ENCODE measurements at regions of chr9 and their contacts with region 1.

Region 1: GRCh38 chr9:94065535-94065961 is 18.7 kb upstream of the PTPDC1 start:
- DNase-seq: peak; percentile 86
- H3K4me3 ChIP-seq: no peak overlapping the region
- H3K27ac ChIP-seq: no peak overlapping the region
- H3K4me1 ChIP-seq: no peaks in the 10 kb centered on the region
- H3K27me3 ChIP-seq: no peaks in the 10 kb centered on the region
- CTCF ChIP-seq: peak; percentile 86

Region 2: DNA sequence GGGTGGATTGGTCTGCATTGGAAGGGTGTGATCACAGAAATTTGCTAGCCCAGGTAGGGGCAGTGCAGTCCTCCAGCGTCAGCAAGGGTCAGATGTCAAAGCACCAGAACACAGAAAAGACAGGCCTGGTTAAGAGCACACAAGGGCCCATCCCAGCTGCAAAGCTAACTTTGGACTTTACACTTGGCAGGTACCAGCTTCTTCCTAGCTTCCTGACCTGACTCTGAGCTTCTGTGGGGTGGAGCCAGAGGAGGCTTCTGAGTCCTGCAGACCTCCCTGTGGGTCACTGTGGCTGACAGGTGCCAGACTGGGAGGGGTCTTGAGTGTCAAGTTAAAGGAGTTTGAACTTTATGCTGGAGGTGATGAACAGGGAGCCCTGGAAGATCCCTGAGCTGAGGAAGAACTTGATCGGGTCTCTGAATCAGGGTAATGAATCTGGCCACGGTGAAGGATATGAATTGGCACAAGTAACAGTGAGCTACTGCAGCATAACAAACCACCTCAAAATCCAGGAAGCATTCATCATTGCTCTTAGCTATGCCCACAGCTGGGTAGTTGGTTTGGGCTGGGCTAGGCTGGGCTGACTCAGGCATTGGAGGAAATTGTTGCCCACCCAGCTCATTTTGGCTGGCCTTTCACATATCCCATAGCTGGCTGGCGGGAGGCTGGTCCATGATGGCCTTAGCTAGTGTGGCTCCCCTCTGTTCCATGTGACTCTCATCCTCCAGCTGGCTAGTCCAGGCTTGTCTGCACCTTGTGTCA is 173.8 kb before region 1 on chr9:
- CTCF ChIA-PET with region 1: no interaction called
- POLR2A ChIA-PET with region 1: no interaction called
- intact Hi-C with region 1: no loop called
- DNase-seq: no peak
- H3K4me3 ChIP-seq: no peak overlapping the region
- H3K27ac ChIP-seq: no peak overlapping the region
- H3K4me1 ChIP-seq: no peaks in the 10 kb centered on the region
- H3K27me3 ChIP-seq: no peaks in the 10 kb centered on the region
- CTCF ChIP-seq: no peak

Region 3: GRCh38 chr9:94534901-94535300 is 469.4 kb after region 1 on chr9:
- CTCF ChIA-PET with region 1: no interaction called
- POLR2A ChIA-PET with region 1: no interaction called
- intact Hi-C with region 1: loop called (anchors 10 kb)
- DNase-seq: no peak
- H3K4me3 ChIP-seq: no peak overlapping the region
- H3K27ac ChIP-seq: no peak overlapping the region
- H3K4me1 ChIP-seq: no peaks in the 10 kb centered on the region
- H3K27me3 ChIP-seq: no peaks in the 10 kb centered on the region
- CTCF ChIP-seq: no peak